ENCODE measurements at regions of chr13 and their contacts with region 1.

Region 1: DNA sequence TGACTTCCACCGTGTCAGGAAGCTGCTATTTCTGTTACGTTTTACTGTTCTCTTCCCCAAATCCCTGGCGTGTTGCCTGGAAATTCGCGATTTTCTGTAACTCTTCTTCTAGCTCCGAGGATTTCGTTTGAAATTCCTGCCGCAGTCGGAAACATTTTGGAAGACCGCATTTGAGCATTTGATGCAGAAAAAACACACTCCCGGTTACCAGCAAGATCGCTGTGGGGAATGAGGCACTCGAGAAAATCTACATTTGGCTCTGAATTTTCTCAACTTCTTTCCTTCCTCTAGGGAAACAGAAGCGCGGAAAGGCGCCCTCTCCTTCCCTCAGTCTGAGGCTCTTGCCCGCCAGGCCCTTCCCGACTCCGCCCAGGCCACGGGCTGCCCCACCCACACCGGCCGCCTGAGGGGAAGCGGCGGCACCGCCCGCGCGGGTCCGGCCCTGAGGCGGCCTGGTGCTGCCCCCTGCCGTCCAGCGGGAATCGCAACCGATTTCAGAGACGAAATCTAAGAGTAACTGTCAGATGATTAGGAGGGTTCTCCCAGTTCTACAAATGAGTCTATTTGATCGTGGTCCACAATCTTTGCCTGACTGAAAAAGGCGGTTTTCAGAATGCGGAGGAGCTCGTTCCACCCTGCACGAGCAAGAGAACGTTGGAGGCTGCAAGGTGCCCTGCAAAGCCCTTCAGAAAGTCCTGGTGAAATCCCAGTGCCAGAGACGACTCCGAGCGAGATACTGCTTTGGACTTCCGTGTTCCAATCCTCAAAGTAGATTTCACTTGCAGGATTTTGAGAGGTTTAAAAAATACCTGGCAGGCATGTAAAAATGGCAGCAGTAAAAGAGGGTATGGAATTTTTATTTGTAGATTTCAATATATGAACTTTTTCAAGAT is 18.4 kb upstream of the TUBGCP3 start:
- DNase-seq: peak; percentile 80 to 94
- H3K4me3 ChIP-seq: peak overlapping the region; percentile 58
- H3K27ac ChIP-seq: no peak overlapping the region
- H3K4me1 ChIP-seq: 0 out of 2 replicates have a peak, but pooled peaks cover 5% of the 10 kb centered on the region
- H3K27me3 ChIP-seq: peaks cover 35% of the 10 kb centered on the region
- CTCF ChIP-seq: peak; percentile 94

Region 2: DNA sequence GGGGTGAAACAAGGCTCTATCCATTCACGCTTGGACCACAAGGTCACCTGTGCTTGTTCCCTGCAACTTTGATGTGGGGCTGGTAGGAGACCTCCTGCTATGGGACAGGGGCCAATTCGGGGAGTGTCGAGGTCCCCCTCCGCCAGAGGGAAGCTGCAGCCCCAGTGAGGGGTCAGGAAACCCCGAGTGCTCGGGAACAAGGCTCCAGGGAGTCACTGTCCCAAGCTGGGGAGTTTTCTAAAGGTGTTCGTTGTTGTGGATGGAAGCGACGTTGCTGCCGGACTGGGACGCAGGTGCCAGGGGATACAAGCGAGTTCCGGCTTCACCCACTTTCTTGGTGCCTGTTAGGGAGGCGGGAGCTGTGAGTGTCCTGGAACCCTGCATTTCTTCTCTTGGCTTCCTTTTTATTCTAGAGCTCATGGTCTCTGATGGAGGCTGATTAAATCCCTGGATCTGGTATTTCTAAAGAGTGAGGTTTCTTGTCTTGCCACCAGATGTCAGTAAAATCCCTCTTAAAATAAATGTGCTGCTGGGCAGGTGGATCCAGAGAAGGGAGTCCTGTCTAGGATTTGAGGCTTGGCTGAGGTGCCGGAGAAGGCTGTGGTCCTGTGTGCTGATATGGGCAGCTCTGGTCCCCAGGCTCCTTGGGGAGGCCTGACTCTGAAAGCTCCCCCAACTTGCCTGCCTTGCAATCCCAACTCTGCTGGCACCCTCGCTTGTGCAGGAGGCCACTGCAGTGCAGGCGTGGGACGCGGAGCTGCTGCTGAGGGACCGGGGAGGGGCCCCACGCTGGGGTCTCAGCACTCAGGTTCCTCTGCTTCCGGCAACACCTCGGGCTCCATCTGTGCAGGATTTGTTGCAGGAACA is 1132.0 kb before region 1 on chr13:
- CTCF ChIA-PET with region 1: no interaction called
- POLR2A ChIA-PET with region 1: no interaction called
- intact Hi-C with region 1: loop called (anchors 5 kb)
- DNase-seq: peak; percentile 7 to 53
- H3K4me3 ChIP-seq: no peak overlapping the region
- H3K27ac ChIP-seq: no peak overlapping the region
- H3K4me1 ChIP-seq: no peaks in the 10 kb centered on the region
- H3K27me3 ChIP-seq: peaks cover 87% of the 10 kb centered on the region
- CTCF ChIP-seq: peak; percentile 81

Region 3: GRCh38 chr13:112443995-112444860 is 162.1 kb before region 1 on chr13:
- CTCF ChIA-PET with region 1: no interaction called
- POLR2A ChIA-PET with region 1: no interaction called
- intact Hi-C with region 1: loop called (anchors 1 kb)
- DNase-seq: peak; percentile 60 to 70
- H3K4me3 ChIP-seq: no peak overlapping the region
- H3K27ac ChIP-seq: no peak overlapping the region
- H3K4me1 ChIP-seq: no peaks in the 10 kb centered on the region
- H3K27me3 ChIP-seq: peaks cover 95% of the 10 kb centered on the region
- CTCF ChIP-seq: peak; percentile 94

Region 4: GRCh38 chr13:112545856-112546255 is 60.5 kb before region 1 on chr13:
- CTCF ChIA-PET with region 1: no interaction called
- POLR2A ChIA-PET with region 1: interaction called, 32 read pairs
- intact Hi-C with region 1: no loop called
- DNase-seq: no peak
- H3K4me3 ChIP-seq: no peak overlapping the region
- H3K27ac ChIP-seq: no peak overlapping the region
- H3K4me1 ChIP-seq: no peaks in the 10 kb centered on the region
- H3K27me3 ChIP-seq: no peaks in the 10 kb centered on the region
- CTCF ChIP-seq: no peak

Region 5: DNA sequence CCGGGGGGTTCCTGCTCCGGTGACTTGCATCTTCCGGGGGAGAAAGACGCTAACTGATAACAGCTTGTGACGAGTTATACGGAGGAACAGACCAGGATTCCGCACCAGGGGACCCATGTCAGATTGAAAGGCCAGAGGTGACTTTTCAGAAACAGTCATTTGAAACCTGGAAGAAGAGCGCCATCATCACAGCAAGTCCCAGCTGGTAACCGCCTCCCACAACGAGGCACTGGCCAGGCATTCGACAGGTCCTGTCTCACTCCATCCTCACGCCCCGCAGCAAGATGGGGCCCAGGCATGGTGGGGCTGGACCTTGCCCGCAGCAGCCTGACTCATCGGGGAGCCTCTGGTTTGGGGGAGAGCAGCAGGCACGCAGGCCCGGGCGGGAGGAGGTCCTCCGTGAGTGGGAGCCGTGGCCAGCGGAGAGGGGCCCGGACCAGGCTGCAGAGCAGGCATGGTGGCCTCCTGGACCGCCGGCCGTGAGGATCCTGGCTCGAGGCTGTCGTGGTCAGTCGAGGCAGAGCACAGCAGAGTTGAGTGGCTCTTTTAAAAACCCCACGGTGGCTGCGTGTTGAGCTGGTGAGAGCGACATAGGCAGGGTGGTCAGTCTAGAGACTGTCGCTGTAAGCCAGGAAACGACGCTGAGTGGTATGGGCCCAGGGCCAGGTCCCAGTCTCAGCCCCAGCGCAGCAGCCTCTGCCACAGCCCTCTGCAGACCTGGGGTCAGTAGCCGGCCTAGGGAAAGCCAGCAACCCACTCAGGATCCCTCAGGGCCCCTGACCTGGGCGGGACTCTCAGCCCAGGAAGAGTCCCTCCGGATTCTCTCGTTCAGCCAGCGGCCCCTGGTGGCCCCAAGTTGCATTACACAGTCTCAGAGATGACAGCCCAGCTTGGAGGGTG is 267.7 kb after region 1 on chr13:
- CTCF ChIA-PET with region 1: no interaction called
- POLR2A ChIA-PET with region 1: no interaction called
- intact Hi-C with region 1: loop called (anchors 2 kb)
- DNase-seq: peak in 1 of 2 experiments; percentile 60
- H3K4me3 ChIP-seq: no peak overlapping the region
- H3K27ac ChIP-seq: no peak overlapping the region
- H3K4me1 ChIP-seq: no peaks in the 10 kb centered on the region
- H3K27me3 ChIP-seq: no peaks in the 10 kb centered on the region
- CTCF ChIP-seq: peak; percentile 95

Region 6: GRCh38 chr13:112893570-112894422 is 287.4 kb after region 1 on chr13:
- CTCF ChIA-PET with region 1: no interaction called
- POLR2A ChIA-PET with region 1: interaction called, 12 read pairs
- intact Hi-C with region 1: no loop called
- DNase-seq: peak in 1 of 2 experiments; percentile 44
- H3K4me3 ChIP-seq: no peak overlapping the region; the same call in 1 of the 2 replicates
- H3K27ac ChIP-seq: no peak overlapping the region
- H3K4me1 ChIP-seq: no peaks in the 10 kb centered on the region; the same call in 1 of the 2 replicates
- H3K27me3 ChIP-seq: peaks cover 91% of the 10 kb centered on the region
- CTCF ChIP-seq: no peak